PC-9 (cell line): ENCODE measurements at regions of chr2 and their contacts with region 1.

Region 1: DNA sequence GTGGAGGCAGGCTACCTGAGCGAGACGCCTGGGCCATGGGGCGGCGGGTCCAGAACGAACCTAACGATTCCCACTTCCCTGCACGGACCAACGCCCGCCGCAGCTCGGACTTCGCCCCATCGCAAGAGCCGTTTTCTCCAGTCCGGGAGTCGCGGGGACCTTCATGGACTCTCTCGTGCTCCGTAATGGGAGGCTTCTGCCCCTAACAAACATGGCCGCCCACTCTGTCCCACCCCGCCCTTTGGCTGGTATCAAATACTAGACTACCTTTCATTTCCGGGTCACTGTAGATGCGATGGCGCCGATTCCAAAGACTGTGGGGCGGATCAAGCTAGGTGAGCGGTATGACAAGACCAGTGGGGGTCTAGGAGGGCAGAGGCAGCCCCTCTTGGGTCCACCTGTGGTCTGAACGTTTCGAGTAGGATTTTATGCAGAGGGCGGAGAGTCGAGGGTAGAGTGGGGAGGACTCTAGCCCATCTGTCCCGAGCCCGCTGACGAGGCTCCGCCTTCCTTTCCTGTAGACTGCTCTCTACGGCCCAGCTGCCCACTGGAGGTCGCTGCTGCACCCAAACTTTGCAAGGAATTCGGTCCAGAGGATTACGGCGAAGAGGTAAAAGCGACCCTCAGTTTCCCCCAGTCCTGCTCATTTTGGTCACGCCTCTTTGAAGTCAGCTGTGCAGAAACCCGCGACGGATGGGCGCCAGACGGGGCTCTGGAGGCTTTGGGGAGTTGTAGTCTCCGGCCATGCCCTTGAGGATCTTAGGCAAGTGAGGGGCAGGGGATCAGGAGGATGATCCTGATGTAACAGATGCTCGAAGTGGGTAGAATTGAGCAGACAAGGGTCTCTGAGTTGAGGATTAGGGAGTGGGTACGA is at the starts of genes CCDC142 and TTC31:
- DNase-seq: peak; percentile 89 to 90
- H3K4me3 ChIP-seq: peak within 1 kb of the TSS; percentile 92
- H3K27ac ChIP-seq: peak within 1 kb of the TSS; percentile 53
- H3K4me1 ChIP-seq: peaks cover 19% of the 10 kb centered on the region
- H3K27me3 ChIP-seq: no peaks in the 10 kb centered on the region
- CTCF ChIP-seq: peak; percentile 91
- total RNA-seq, gene CCDC142: 16.8 and 19.8 TPM in 2 replicates
- total RNA-seq, gene TTC31: 20.1 and 21.8 TPM in 2 replicates

Region 2: GRCh38 chr2:74458132-74458925 is 24.7 kb before region 1 on chr2 and contains the start of gene WBP1:
- CTCF ChIA-PET with region 1: interaction called, 4 read pairs
- POLR2A ChIA-PET with region 1: interaction called, 5 read pairs
- intact Hi-C with region 1: loop called (anchors 1 kb)
- DNase-seq: peak; percentile 99 to 100
- H3K4me3 ChIP-seq: peak within 1 kb of the TSS; percentile 93
- H3K27ac ChIP-seq: peak within 1 kb of the TSS; percentile 29; the same call in 1 of the 2 replicates
- H3K4me1 ChIP-seq: peaks cover 22% of the 10 kb centered on the region
- H3K27me3 ChIP-seq: no peaks in the 10 kb centered on the region
- CTCF ChIP-seq: no peak
- total RNA-seq, gene WBP1: 68.0 and 74.7 TPM in 2 replicates

Region 3: GRCh38 chr2:74529357-74530238 is 46.6 kb after region 1 on chr2 and contains the starts of genes AUP1 and HTRA2:
- CTCF ChIA-PET with region 1: interaction called, 3 read pairs
- POLR2A ChIA-PET with region 1: interaction called, 3 read pairs
- intact Hi-C with region 1: loop called (anchors 1 kb)
- DNase-seq: peak; percentile 97 to 98
- H3K4me3 ChIP-seq: peak within 1 kb of the TSS; percentile 93
- H3K27ac ChIP-seq: peak within 1 kb of the TSS; percentile 48
- H3K4me1 ChIP-seq: peaks cover 18% of the 10 kb centered on the region
- H3K27me3 ChIP-seq: no peaks in the 10 kb centered on the region
- CTCF ChIP-seq: no peak
- total RNA-seq, gene AUP1: 79.2 and 84.0 TPM in 2 replicates
- total RNA-seq, gene HTRA2: 23.2 and 23.5 TPM in 2 replicates

Region 4: DNA sequence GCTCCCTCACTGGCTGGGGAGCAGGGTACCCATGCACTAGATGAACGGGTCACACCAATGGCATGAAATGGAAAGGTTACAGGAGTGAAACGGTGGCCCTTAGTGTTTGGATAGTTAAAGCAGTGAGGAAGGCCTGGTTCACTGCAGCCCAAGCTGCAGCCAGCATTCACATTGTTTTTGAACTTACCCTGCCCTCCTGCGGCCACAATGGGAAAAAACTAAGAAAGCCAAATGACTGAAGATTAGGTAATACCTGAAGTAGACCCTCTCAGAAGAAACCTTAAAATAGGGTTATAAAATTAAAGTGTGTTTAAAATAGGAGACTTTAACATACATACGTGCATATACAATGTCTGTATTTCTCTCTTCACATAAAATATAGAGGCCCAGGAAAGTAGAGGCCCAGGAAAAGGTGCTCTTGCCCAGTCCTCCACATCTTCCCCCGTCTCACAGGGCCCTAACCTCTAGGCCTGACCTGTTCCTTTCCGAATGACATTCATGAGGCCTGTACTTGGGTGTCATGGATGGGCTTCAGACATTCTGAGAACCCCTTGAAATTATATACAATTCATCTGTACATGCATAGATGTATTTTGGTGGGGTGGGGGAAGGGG is 104.7 kb after region 1 on chr2:
- CTCF ChIA-PET with region 1: interaction called, 7 read pairs
- POLR2A ChIA-PET with region 1: no interaction called
- intact Hi-C with region 1: loop called (anchors 1 kb)
- DNase-seq: peak; percentile 57
- H3K4me3 ChIP-seq: no peak overlapping the region
- H3K27ac ChIP-seq: no peak overlapping the region
- H3K4me1 ChIP-seq: peaks cover 14% of the 10 kb centered on the region
- H3K27me3 ChIP-seq: no peaks in the 10 kb centered on the region
- CTCF ChIP-seq: peak; percentile 77